Activated T-helper 1 cell treated with anti-CD3 and anti-CD28 coated beads, Interleukin-12 subunit alpha, Interleukin-12 subunit beta, Interleukin-2, Interleukin-4 antibody, amounts not matched to agents 30 ng/mL and 10 ng/mL and 1 ng/mL, durations not matched to agents 14 hours and 24 hours and 36 hours (primary cell): ENCODE measurements at regions of chr6 and their contacts with region 1.

Region 1: DNA sequence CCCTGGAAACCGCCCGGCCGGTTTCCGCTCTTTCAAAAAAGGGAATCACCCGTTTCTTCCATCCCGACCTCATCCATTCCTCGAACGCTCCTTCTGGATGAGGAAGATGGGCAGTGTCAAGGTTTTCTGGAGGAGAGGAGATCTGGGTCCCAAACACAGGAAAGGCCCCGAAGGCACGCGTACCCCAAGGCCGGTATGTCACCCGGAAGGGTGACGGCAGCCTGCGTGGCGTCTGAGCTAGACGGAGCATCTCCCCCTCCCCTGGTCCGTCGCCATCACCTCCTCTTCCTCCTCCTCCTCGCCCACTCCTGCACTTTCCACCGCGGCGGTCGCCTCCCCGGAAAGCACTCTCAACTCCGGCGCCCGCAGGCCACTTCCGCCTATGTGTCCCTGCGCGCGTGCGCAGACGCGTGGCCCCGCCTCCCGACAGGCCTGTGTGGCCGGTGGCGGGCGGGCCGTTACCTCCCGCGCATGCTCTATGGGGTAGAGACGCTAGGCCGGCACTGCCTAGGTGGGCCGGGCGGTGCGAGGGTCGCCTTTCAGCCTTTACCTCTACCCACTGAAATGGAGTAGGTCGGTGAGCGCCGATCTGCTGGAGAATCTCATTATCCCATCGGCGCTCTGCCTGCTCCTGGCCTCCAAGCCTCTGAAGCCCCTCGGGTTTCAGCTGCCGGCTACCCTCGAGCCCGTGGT is at the start of gene SLC35B3:
- DNase-seq: peak; percentile 98
- H3K4me3 Mint-ChIP-seq: peak within 1 kb of the TSS; percentile 94
- H3K27ac Mint-ChIP-seq: peak within 1 kb of the TSS; percentile 98
- H3K4me1 Mint-ChIP-seq: peaks cover 39% of the 10 kb centered on the region
- H3K27me3 Mint-ChIP-seq: peaks cover 3% of the 10 kb centered on the region
- total RNA-seq, gene SLC35B3: 6.4 and 6.5 TPM in 2 replicates

Region 2: DNA sequence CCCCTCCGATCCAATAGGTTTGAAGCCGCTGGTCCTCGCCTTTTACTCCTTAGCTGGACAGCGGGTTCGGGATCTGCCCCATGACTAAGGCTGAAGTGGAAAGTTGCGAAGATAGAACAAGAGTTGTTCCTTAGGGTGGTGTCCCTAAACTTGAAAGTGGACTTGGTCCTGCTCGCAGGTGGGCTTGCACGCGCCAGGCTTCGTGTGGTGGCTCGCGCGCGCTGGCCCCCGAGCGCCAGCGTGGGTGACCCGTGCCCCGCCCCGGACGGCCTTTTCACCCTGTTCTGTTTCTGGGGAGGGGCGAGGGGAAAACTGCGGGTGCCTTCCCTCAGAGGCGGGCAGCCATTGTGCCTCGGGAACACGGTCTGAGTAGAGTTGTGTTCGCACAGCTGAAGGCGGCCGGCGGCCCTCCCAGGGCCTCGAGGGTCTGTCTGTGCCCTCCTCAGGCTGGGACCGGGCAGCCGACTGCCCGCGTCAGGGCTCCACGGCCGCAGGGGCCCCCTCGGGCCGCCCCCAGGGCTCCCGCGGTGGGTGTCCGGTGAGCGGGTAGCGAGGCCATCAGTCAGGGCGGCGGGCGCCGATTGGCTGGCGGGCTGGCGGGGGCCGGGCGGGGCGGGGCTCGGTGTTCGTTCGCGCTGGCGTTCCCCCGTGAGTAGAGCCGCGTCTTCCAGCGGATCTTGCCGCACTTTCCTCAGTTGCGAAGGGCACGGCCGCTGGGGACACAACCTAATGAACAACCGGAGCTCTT is 1294.5 kb before region 1 on chr6:
- intact Hi-C with region 1: loop called (anchors 10 kb)
- DNase-seq: peak; percentile 78
- H3K4me3 Mint-ChIP-seq: peak overlapping the region; percentile 84
- H3K27ac Mint-ChIP-seq: peak overlapping the region; percentile 84
- H3K4me1 Mint-ChIP-seq: peaks cover 68% of the 10 kb centered on the region
- H3K27me3 Mint-ChIP-seq: no peaks in the 10 kb centered on the region

Region 3: DNA sequence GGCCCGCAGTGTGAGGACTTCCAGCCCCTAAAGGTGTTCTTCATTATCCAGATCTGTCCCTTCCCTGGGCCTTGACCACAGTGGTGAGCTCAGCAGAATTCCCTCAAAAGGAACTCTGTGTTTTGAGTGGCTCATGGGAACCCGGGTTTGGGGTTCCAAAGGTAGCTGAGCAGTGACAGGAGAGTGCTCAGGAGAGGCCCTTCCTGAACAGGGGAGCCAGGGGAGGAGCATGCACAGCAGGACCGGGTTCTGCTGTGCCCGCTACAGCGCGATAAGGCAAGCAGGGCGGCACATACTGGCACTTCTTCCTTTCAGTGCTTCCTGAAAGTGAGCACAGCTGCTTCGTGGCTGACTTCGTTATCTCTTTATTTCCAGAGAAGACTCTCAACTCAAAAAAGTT is 1210.6 kb before region 1 on chr6:
- intact Hi-C with region 1: no loop called
- DNase-seq: no peak
- H3K4me3 Mint-ChIP-seq: no peak overlapping the region
- H3K27ac Mint-ChIP-seq: no peak overlapping the region
- H3K4me1 Mint-ChIP-seq: no peaks in the 10 kb centered on the region
- H3K27me3 Mint-ChIP-seq: no peaks in the 10 kb centered on the region

Region 4: GRCh38 chr6:7389451-7390225 is 1045.7 kb before region 1 on chr6 and contains the starts of genes CAGE1 and RIOK1:
- intact Hi-C with region 1: loop called (anchors 1 kb)
- DNase-seq: peak; percentile 93
- H3K4me3 Mint-ChIP-seq: peak within 1 kb of the TSS; percentile 92
- H3K27ac Mint-ChIP-seq: peak within 1 kb of the TSS; percentile 100
- H3K4me1 Mint-ChIP-seq: peaks cover 53% of the 10 kb centered on the region
- H3K27me3 Mint-ChIP-seq: no peaks in the 10 kb centered on the region
- total RNA-seq, gene CAGE1: 0.13 and 0.20 TPM in 2 replicates
- total RNA-seq, gene RIOK1: 61.4 and 67.2 TPM in 2 replicates

Region 5: GRCh38 chr6:7615611-7616383 is 819.5 kb before region 1 on chr6:
- intact Hi-C with region 1: loop called (anchors 10 kb)
- DNase-seq: no peak
- H3K4me3 Mint-ChIP-seq: no peak overlapping the region
- H3K27ac Mint-ChIP-seq: no peak overlapping the region
- H3K4me1 Mint-ChIP-seq: peaks cover 18% of the 10 kb centered on the region
- H3K27me3 Mint-ChIP-seq: peaks cover 3% of the 10 kb centered on the region

Region 6: GRCh38 chr6:8017276-8017701 is 418.0 kb before region 1 on chr6:
- intact Hi-C with region 1: loop called (anchors 5 kb)
- DNase-seq: no peak
- H3K4me3 Mint-ChIP-seq: peak overlapping the region; percentile 86
- H3K27ac Mint-ChIP-seq: peak overlapping the region; percentile 97
- H3K4me1 Mint-ChIP-seq: peaks cover 22% of the 10 kb centered on the region
- H3K27me3 Mint-ChIP-seq: no peaks in the 10 kb centered on the region

Region 7: DNA sequence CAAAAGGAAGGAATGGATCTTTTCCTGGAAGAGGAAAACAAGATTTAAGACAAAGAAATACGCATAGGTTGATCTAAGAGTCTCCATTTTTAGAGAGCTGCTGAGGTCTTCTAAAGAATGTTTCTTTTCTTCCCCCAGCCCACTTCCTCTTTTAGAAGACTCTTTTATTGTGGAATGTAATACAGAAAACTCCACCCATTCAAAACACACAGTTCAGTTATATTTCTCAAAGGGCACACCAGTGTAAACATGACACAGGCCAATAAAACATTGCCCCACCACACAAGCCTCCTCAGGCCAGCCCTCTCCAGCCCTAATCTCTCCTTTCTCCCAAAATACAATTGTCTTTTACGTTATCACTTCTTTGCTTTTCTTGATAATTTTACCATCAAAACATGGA is 42.7 kb before region 1 on chr6:
- intact Hi-C with region 1: no loop called
- DNase-seq: no peak
- H3K4me3 Mint-ChIP-seq: no peak overlapping the region
- H3K27ac Mint-ChIP-seq: no peak overlapping the region
- H3K4me1 Mint-ChIP-seq: peaks cover 13% of the 10 kb centered on the region
- H3K27me3 Mint-ChIP-seq: peaks cover 2% of the 10 kb centered on the region

Region 8: GRCh38 chr6:10404107-10404798 is 1968.9 kb after region 1 on chr6:
- intact Hi-C with region 1: loop called (anchors 5 kb)
- DNase-seq: peak; percentile 89
- H3K4me3 Mint-ChIP-seq: peak overlapping the region; percentile 82
- H3K27ac Mint-ChIP-seq: peak overlapping the region; percentile 73
- H3K4me1 Mint-ChIP-seq: peaks cover 11% of the 10 kb centered on the region
- H3K27me3 Mint-ChIP-seq: peaks cover 71% of the 10 kb centered on the region